IMR-90 (cell line): ENCODE measurements at regions of chr1 and their contacts with region 1.

Region 1: GRCh38 chr1:228734881-228735801 is at the start of gene RHOU:
- DNase-seq: peak; percentile 37
- ATAC-seq: peak; percentile 92
- H3K4me3 ChIP-seq: peak within 1 kb of the TSS; percentile 62
- H3K27ac ChIP-seq: peak within 1 kb of the TSS; percentile 58
- H3K4me1 ChIP-seq: no peaks in the 10 kb centered on the region; the same call in 1 of the 2 replicates
- H3K27me3 ChIP-seq: peaks cover 21% of the 10 kb centered on the region
- CTCF ChIP-seq: peak; percentile 71
- POLR2A ChIP-seq: no peak
- RAD21 ChIP-seq: peak; percentile 71
- total RNA-seq, gene RHOU: 0.72 and 0.83 TPM in 2 replicates

Region 2: DNA sequence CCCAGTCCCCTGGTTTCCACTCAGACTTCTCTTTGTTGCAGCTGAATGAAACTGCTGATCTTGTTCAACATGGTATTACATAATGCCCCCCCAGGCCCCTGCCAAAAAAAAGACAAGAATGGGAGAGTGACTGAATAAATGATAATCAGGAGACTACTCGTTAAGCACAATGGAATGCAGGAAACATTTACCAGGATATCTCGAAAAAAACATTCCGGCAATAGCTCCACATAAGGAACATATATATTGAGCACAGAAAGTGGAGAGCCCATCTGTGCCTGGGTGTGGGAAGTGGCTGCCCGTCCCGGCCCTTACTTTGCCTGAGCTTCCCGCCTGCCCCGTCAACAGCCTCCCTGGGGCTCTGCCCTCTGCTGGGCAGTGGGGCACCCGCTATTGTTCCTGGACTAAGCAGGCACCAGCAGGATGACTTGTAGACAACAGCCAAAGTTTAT is 341.9 kb before region 1 on chr1:
- CTCF ChIA-PET with region 1: no interaction called
- POLR2A ChIA-PET with region 1: no interaction called
- dilution Hi-C with region 1: no loop called
- in situ Hi-C with region 1: no loop called
- intact Hi-C with region 1: no loop called
- DNase-seq: peak; percentile 73
- ATAC-seq: peak; percentile 90
- H3K4me3 ChIP-seq: no peak overlapping the region
- H3K27ac ChIP-seq: peak overlapping the region; percentile 39; the same call in 1 of the 2 replicates
- H3K4me1 ChIP-seq: peaks cover 20% of the 10 kb centered on the region
- H3K27me3 ChIP-seq: no peaks in the 10 kb centered on the region
- CTCF ChIP-seq: peak; percentile 60
- POLR2A ChIP-seq: no peak
- RAD21 ChIP-seq: peak; percentile 46

Region 3: DNA sequence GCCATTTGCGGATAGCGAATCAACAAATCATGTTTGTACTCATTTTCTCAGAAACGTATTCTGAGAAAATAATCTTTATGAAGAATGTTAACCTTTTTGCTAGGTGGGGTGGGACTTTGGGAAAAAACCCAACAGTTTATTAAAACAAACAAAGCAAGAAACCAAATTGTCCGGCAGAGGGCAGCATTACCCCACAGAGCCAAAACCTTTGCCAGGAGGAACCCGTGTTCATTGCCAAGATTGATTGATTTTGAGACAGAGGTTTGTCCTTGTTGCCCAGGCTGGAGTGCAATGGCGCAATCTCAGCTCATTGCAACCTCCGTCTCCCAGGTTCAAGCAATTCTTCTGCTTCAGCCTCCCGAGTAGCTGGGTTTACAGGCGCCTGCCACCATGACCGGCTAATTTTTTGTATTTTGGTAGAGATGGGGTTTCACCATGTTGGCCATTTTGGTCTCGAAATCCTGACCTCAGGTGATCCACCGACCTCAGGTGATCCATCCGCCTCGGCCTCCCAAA is 70.7 kb before region 1 on chr1:
- CTCF ChIA-PET with region 1: no interaction called
- POLR2A ChIA-PET with region 1: no interaction called
- dilution Hi-C with region 1: no loop called
- in situ Hi-C with region 1: no loop called
- intact Hi-C with region 1: loop called (anchors 1 kb)
- DNase-seq: peak; percentile 50
- ATAC-seq: peak; percentile 66
- H3K4me3 ChIP-seq: no peak overlapping the region
- H3K27ac ChIP-seq: no peak overlapping the region
- H3K4me1 ChIP-seq: no peaks in the 10 kb centered on the region
- H3K27me3 ChIP-seq: peaks cover 7% of the 10 kb centered on the region; the same call in 1 of the 2 replicates
- CTCF ChIP-seq: peak; percentile 85
- POLR2A ChIP-seq: no peak
- RAD21 ChIP-seq: peak; percentile 89

Region 4: GRCh38 chr1:228902781-228903433 is 167.8 kb after region 1 on chr1:
- CTCF ChIA-PET with region 1: no interaction called
- POLR2A ChIA-PET with region 1: no interaction called
- dilution Hi-C with region 1: no loop called
- in situ Hi-C with region 1: no loop called
- intact Hi-C with region 1: loop called (anchors 1 kb)
- DNase-seq: peak; percentile 99
- ATAC-seq: peak; percentile 86
- H3K4me3 ChIP-seq: no peak overlapping the region
- H3K27ac ChIP-seq: peak overlapping the region; percentile 27; the same call in 1 of the 2 replicates
- H3K4me1 ChIP-seq: peaks cover 25% of the 10 kb centered on the region
- H3K27me3 ChIP-seq: no peaks in the 10 kb centered on the region
- CTCF ChIP-seq: no peak
- POLR2A ChIP-seq: no peak
- RAD21 ChIP-seq: peak; percentile 8; the same call in 1 of the 2 replicates

Region 5: DNA sequence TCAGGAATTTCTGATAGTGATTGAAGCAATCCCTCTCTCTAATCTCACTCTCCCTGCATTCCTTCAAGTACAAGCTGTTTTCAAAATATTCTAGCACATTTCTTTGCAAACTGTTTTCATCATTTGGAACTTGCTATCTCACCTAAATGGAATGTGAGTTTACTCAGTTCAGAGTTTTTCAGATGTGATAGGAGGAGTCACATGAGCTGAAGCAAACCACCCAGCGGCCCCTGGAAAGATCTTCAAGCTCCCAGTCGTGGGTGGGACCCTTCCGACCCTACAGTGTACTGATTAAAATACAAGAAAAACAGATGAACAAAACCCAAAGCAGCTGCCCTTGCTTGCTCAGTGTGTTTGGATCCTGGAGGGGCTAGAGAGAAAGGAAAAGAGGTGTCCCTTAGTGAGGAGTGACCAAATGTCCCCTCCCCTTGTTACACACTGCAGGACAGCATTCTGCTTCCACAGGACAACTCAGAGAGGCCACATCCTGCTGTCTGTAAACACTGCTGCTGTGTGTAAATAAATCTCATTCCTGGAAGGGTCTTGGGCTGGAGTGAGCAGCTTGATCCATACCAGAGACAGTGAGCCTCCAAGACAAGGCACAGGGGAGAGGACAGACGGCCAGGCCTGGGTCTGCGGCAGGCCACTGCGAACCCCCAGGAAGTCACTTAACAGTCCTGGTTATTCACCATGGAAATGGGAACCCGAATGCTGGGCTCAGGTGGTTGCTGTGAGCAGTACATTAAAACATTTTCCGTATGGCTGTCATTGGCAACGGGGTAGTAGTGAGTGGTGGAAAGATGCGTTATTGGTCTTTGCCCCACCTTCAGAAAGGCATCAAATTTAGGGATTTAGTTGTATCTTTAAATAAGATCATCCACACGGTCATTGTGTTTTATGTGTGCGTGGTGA is 229.3 kb after region 1 on chr1:
- CTCF ChIA-PET with region 1: no interaction called
- POLR2A ChIA-PET with region 1: no interaction called
- dilution Hi-C with region 1: no loop called
- in situ Hi-C with region 1: no loop called
- intact Hi-C with region 1: loop called (anchors 5 kb)
- DNase-seq: peak; percentile 94
- ATAC-seq: peak; percentile 96
- H3K4me3 ChIP-seq: no peak overlapping the region
- H3K27ac ChIP-seq: peak overlapping the region; percentile 97
- H3K4me1 ChIP-seq: peaks cover 12% of the 10 kb centered on the region
- H3K27me3 ChIP-seq: no peaks in the 10 kb centered on the region
- CTCF ChIP-seq: no peak
- POLR2A ChIP-seq: no peak
- RAD21 ChIP-seq: 0 out of 2 replicates have a peak, but pooled peaks have one; percentile 1

Region 6: GRCh38 chr1:229156872-229157271 is 421.7 kb after region 1 on chr1:
- CTCF ChIA-PET with region 1: no interaction called
- POLR2A ChIA-PET with region 1: no interaction called
- dilution Hi-C with region 1: no loop called
- in situ Hi-C with region 1: no loop called
- intact Hi-C with region 1: loop called (anchors 1 kb)
- DNase-seq: no peak
- ATAC-seq: no peak
- H3K4me3 ChIP-seq: no peak overlapping the region
- H3K27ac ChIP-seq: no peak overlapping the region
- H3K4me1 ChIP-seq: no peaks in the 10 kb centered on the region
- H3K27me3 ChIP-seq: peaks cover 24% of the 10 kb centered on the region
- CTCF ChIP-seq: peak; percentile 31; the same call in 1 of the 2 replicates
- POLR2A ChIP-seq: no peak
- RAD21 ChIP-seq: peak; percentile 37; the same call in 1 of the 2 replicates